Ovary (tissue), 10 donors: ENCODE measurements at regions of chr11 and their contacts with region 1.

Region 1: DNA sequence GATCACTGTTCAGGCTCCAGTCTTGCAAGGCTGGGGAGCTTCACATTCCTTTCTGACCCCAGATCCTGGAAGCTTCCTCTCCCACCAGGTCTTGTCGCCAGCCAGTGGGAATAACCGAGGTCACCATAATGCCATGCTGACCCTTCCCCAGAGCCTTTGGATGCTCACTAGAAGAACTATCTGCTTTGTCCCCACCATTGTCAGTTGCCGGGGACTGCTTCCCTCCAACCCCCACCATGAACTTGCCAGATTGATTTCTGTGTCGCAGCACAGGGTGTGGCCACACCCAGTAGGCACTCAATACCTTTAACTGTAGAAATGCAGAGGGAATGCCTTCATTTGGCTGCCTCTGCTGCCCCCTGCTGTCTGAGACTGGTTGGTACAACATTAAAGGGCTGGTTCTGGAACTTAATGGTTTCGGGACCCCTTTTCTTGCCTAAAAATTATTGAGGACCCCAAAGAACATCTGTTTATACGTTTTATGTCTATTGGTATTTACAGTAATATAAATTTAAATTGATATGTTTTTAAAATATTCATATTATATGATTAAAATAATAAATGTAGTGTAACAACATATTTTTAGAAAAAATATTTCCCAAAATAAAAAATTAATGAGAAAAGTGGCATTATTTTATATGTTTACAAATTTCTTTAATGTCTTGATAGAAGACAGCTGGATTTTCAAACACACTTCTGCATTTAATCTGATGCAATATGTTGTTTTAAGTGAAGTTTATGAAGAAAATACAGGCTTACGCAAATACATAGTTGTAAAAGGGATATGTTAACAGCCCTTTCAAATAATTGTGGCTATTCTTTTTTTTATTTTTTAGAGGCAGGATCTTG is 6.7 kb upstream of the GDPD5 start:
- DNase-seq: peak; percentile 52 to 76 (median 76)
- H3K4me3 ChIP-seq: no peak overlapping the region
- H3K27ac ChIP-seq: no peak overlapping the region
- H3K4me1 ChIP-seq: peaks cover 5% of the 10 kb centered on the region
- H3K27me3 ChIP-seq: no peaks in the 10 kb centered on the region
- CTCF ChIP-seq: peak; percentile 72 to 90 (median 81)
- EP300 ChIP-seq: no peak
- POLR2A ChIP-seq: no peak

Region 2: DNA sequence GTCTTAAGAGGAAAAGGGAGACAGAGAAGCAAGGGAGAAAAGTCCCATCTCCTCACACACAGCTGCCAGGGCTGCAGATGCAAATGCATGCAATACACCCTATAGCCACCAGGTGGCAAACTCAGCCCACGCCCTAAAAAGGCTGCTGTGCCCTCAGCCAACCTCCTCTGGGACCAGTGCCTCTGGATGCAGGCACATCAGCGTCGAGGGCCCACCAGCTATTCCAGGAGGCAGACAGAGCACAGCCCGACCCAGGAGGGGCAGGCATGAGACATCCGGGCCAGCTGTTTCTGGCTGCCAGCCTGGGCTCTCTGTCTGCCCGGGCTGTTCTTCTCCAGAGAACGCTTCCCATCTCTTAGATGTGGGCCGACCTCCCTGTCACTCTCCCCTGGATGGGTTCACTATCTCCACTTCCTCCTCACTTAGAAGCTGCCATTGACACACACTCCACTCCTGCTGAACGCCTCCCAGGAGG is 252.2 kb before region 1 on chr11:
- intact Hi-C with region 1: loop called in 1 of 4 experiments (anchors 5 kb)
- DNase-seq: peak; percentile 65 to 81 (median 81)
- H3K4me3 ChIP-seq: no peak overlapping the region
- H3K27ac ChIP-seq: no peak overlapping the region
- H3K4me1 ChIP-seq: no peaks in the 10 kb centered on the region
- H3K27me3 ChIP-seq: no peaks in the 10 kb centered on the region
- CTCF ChIP-seq: peak; percentile 94 to 98 (median 95)
- EP300 ChIP-seq: no peak
- POLR2A ChIP-seq: no peak

Region 3: DNA sequence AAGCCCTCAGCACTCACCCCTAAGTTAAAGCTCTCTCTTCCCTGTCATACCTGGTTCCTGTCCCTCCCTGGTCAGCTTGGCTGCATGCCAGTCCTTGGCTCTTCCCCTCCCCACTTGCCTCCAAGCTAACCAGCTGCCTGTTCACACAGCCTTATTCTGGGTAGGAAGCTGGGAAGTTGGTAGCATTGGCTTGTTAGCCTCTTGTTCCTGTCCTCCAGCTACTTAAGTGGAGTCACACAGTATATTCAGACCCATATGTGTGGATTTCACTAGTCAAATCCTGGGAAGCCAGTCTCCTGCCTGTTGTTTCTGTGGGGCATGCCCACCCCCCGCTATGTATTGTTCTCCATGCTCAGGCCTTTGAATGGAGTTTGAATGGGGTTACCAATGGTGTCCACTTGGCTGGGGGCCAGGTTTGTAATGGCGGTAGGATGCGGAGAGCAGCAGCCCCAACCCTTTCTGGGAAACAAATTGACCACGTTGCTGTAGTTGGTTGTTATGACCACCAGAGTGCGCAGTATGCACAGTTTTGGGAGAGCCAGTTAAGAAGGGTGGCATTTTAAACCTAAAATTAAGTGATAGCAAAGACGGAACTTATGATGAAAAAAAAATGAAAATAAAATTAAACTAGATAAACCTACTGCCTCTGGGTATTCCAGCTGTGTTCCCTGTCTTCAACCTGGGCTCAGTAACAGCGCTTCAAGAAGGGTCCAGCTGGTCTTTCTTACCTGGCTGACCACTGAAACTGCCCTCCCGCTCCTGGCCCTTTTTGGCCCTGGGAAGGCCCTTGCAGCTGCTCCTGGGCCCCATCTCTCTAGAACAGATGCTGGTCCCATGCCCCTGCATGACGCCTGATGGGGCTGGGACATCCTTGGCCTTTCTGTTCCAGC is 143.8 kb before region 1 on chr11:
- intact Hi-C with region 1: loop called in 3 of 4 experiments (anchors 5 to 10 kb)
- DNase-seq: peak; percentile 55 to 74 (median 72)
- H3K4me3 ChIP-seq: no peak overlapping the region
- H3K27ac ChIP-seq: no peak overlapping the region
- H3K4me1 ChIP-seq: no peaks in the 10 kb centered on the region
- H3K27me3 ChIP-seq: no peaks in the 10 kb centered on the region
- CTCF ChIP-seq: peak; percentile 61 to 72 (median 68)
- EP300 ChIP-seq: no peak
- POLR2A ChIP-seq: no peak

Region 4: GRCh38 chr11:75399344-75400145 is 132.9 kb before region 1 on chr11 and contains the start of gene RPS3:
- intact Hi-C with region 1: loop called in 2 of 4 experiments (anchors 5 kb)
- DNase-seq: peak; percentile 90 to 93 (median 90)
- H3K4me3 ChIP-seq: peak within 1 kb of the TSS; percentile 74
- H3K27ac ChIP-seq: peak within 1 kb of the TSS; percentile 54 to 76
- H3K4me1 ChIP-seq: peaks cover 4% of the 10 kb centered on the region
- H3K27me3 ChIP-seq: no peaks in the 10 kb centered on the region
- CTCF ChIP-seq: peak in 1 of 3 donors; percentile 27
- EP300 ChIP-seq: no peak
- POLR2A ChIP-seq: peak; percentile 88
- total RNA-seq, gene RPS3: 4,127 to 7,276 (median 5,342) TPM

Region 5: GRCh38 chr11:75445315-75445953 is 87.0 kb before region 1 on chr11:
- intact Hi-C with region 1: loop called (anchors 1 to 2 kb)
- DNase-seq: peak; percentile 60 to 84 (median 81)
- H3K4me3 ChIP-seq: no peak overlapping the region
- H3K27ac ChIP-seq: no peak overlapping the region
- H3K4me1 ChIP-seq: no peaks in the 10 kb centered on the region
- H3K27me3 ChIP-seq: no peaks in the 10 kb centered on the region
- CTCF ChIP-seq: peak; percentile 84 to 97 (median 93)
- EP300 ChIP-seq: no peak
- POLR2A ChIP-seq: no peak

Region 6: DNA sequence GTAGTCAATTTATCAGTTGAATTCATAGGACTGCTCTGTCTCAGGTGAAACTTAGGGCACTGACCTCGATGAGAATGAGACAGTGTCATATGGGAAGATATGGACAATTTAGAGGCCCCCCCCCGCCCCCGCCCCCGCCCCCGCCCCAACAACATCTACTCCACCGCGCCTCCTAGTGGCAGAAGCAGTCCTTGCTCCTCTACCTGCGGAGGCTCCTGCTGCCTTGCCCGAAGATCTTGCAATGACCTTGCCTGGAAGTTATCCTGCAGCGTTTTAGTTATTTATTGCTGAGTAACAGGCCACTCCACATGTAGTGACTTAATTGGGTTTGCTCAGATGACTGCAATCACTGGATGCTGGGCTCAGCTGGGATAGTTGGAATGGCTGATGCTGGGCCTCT is 44.8 kb after region 1 on chr11:
- intact Hi-C with region 1: no loop called
- DNase-seq: peak in 4 of 5 donors; percentile 69 to 77 (median 74)
- H3K4me3 ChIP-seq: no peak overlapping the region
- H3K27ac ChIP-seq: peak overlapping the region in 1 of 2 donors; percentile 41
- H3K4me1 ChIP-seq: peaks cover 5% of the 10 kb centered on the region
- H3K27me3 ChIP-seq: no peaks in the 10 kb centered on the region
- CTCF ChIP-seq: peak in 1 of 3 donors; percentile 12
- EP300 ChIP-seq: no peak
- POLR2A ChIP-seq: no peak